Heart right ventricle (tissue), 16 donors: ENCODE measurements at regions of chr20 and their contacts with region 1.

Region 1: GRCh38 chr20:59403261-59403961 is 103.0 kb downstream of the EDN3 start:
- DNase-seq: peak; percentile 21 to 52
- ATAC-seq: peak; percentile 60 to 78 (median 68)
- H3K4me3 ChIP-seq: peak overlapping the region in 3 of 10 donors; percentile 9 to 17 (median 10)
- H3K27ac ChIP-seq: no peak overlapping the region
- H3K4me1 ChIP-seq: peaks cover 0 to 19% (median 10%) of the 10 kb centered on the region in 9 donors
- H3K27me3 ChIP-seq: peaks cover 12 to 97% (median 89%) of the 10 kb centered on the region in 7 donors
- CTCF ChIP-seq: peak; percentile 80 to 98 (median 95)

Region 2: GRCh38 chr20:59055295-59055694 is 348.1 kb before region 1 on chr20:
- intact Hi-C with region 1: loop called in 2 of 10 experiments (anchors 5 to 10 kb)
- DNase-seq: peak in 1 of 2 donors; percentile 25
- ATAC-seq: peak in 1 of 8 donors; percentile 57
- H3K4me3 ChIP-seq: no peak overlapping the region
- H3K27ac ChIP-seq: no peak overlapping the region
- H3K4me1 ChIP-seq: no peaks in the 10 kb centered on the region
- H3K27me3 ChIP-seq: peaks cover 0 to 53% (median 5%) of the 10 kb centered on the region in 7 donors
- CTCF ChIP-seq: peak in 8 of 9 donors; percentile 13 to 64 (median 54)

Region 3: GRCh38 chr20:59063358-59064213 is 339.8 kb before region 1 on chr20:
- intact Hi-C with region 1: loop called in 2 of 10 experiments (anchors 5 to 10 kb)
- DNase-seq: peak; percentile 42 to 56
- ATAC-seq: peak; percentile 69 to 99 (median 96)
- H3K4me3 ChIP-seq: peak overlapping the region in 6 of 10 donors; percentile 1 to 39 (median 10)
- H3K27ac ChIP-seq: peak overlapping the region in 8 of 10 donors; percentile 19 to 70 (median 58)
- H3K4me1 ChIP-seq: peaks cover 0 to 21% (median 14%) of the 10 kb centered on the region in 9 donors
- H3K27me3 ChIP-seq: peaks cover 0 to 25% (median 0%) of the 10 kb centered on the region in 7 donors
- CTCF ChIP-seq: no peak

Region 4: DNA sequence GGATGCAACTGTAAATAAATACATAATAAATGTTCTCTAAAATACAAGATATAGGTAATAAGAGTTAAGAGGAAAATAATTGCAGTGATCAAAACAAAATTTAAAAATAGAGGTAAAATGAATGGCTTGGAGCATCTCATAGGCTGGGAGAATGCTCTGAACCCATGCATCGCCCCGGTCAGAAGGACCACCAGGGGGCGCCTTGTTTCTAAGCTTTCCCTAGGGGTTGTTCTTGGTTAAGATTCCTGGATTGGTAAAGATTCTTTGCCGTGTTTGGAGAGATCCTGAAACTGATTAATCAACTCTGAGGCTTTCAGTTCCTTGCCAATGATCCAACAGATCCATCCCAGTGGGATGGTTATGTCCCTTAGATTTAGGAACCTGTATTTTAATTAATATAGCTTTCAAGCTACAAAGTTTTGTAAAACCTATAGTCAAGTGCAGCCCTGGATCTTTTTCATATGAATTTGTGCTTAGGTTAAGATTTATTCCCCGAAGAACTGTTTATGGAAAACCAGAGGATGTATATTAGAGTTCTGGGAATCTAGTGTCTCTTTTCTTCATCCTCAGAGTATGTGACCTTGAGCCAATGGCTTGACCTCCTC is 315.5 kb before region 1 on chr20:
- intact Hi-C with region 1: loop called in 3 of 10 experiments (anchors 10 kb)
- DNase-seq: peak; percentile 81 to 84
- ATAC-seq: peak in 6 of 8 donors; percentile 74 to 88 (median 86)
- H3K4me3 ChIP-seq: no peak overlapping the region
- H3K27ac ChIP-seq: no peak overlapping the region
- H3K4me1 ChIP-seq: peaks cover 0 to 17% (median 0%) of the 10 kb centered on the region in 9 donors
- H3K27me3 ChIP-seq: peaks cover 0 to 9% (median 0%) of the 10 kb centered on the region in 7 donors
- CTCF ChIP-seq: peak; percentile 80 to 97 (median 94)

Region 5: GRCh38 chr20:59232618-59233017 is 170.8 kb before region 1 on chr20:
- intact Hi-C with region 1: loop called in 2 of 10 experiments (anchors 10 kb)
- DNase-seq: no peak
- ATAC-seq: no peak
- H3K4me3 ChIP-seq: no peak overlapping the region
- H3K27ac ChIP-seq: no peak overlapping the region
- H3K4me1 ChIP-seq: no peaks in the 10 kb centered on the region
- H3K27me3 ChIP-seq: peaks cover 0 to 64% (median 30%) of the 10 kb centered on the region in 7 donors
- CTCF ChIP-seq: no peak

Region 6: GRCh38 chr20:59455402-59456341 is 52.3 kb after region 1 on chr20:
- intact Hi-C with region 1: no loop called
- DNase-seq: peak in 1 of 2 donors; percentile 28
- ATAC-seq: peak in 7 of 8 donors; percentile 39 to 86 (median 54)
- H3K4me3 ChIP-seq: no peak overlapping the region
- H3K27ac ChIP-seq: no peak overlapping the region
- H3K4me1 ChIP-seq: peaks cover 0 to 16% (median 4%) of the 10 kb centered on the region in 9 donors
- H3K27me3 ChIP-seq: peaks cover 0 to 43% (median 15%) of the 10 kb centered on the region in 7 donors
- CTCF ChIP-seq: peak; percentile 11 to 66 (median 55)